Activated CD4-positive, alpha-beta T cell treated with anti-CD3 and anti-CD28 coated beads, Interleukin-2, amount 10 ng/mL, durations not matched to agents 7 days and 5 days (primary cell): ENCODE measurements at regions of chr3 and their contacts with region 1.

Region 1: GRCh38 chr3:4978204-4978965 is 852 bp upstream of the BHLHE40 start:
- DNase-seq: peak; percentile 83
- H3K4me3 Mint-ChIP-seq: peak overlapping the region; percentile 99
- H3K27ac Mint-ChIP-seq: peak overlapping the region; percentile 98
- H3K4me1 Mint-ChIP-seq: peaks cover 49% of the 10 kb centered on the region
- H3K27me3 Mint-ChIP-seq: no peaks in the 10 kb centered on the region

Region 2: DNA sequence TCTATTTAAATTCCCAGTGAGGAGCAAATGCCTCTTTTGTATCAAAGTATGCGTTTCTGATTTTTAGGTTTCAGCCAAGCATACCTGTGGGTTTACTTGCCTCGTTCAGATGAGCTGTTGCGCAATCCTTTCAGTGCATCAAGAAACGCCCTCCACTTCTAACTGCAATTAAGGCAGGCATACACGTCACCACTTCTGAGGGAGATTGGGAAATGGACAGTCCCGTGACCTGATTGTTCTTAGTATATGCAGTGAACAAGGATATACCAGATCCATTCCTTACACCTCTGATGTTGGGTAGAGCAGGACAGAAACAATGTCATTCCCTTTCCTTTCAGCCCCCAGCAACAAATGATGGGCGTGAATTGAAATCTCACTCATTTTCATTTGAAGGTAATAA is 266.2 kb before region 1 on chr3:
- CTCF ChIA-PET with region 1: interaction called, 33 read pairs
- POLR2A ChIA-PET with region 1: interaction called, 4 read pairs
- DNase-seq: no peak
- H3K4me3 Mint-ChIP-seq: no peak overlapping the region
- H3K27ac Mint-ChIP-seq: no peak overlapping the region
- H3K4me1 Mint-ChIP-seq: peaks cover 18% of the 10 kb centered on the region
- H3K27me3 Mint-ChIP-seq: no peaks in the 10 kb centered on the region

Region 3: GRCh38 chr3:4741404-4742307 is 236.7 kb before region 1 on chr3:
- CTCF ChIA-PET with region 1: interaction called, 14 read pairs
- POLR2A ChIA-PET with region 1: interaction called, 3 read pairs
- DNase-seq: no peak
- H3K4me3 Mint-ChIP-seq: no peak overlapping the region
- H3K27ac Mint-ChIP-seq: peak overlapping the region; percentile 89
- H3K4me1 Mint-ChIP-seq: peaks cover 74% of the 10 kb centered on the region
- H3K27me3 Mint-ChIP-seq: no peaks in the 10 kb centered on the region

Region 4: GRCh38 chr3:4850211-4850927 is 128.0 kb before region 1 on chr3:
- CTCF ChIA-PET with region 1: interaction called, 13 read pairs
- POLR2A ChIA-PET with region 1: interaction called, 15 read pairs
- DNase-seq: peak; percentile 61
- H3K4me3 Mint-ChIP-seq: peak overlapping the region; percentile 6
- H3K27ac Mint-ChIP-seq: peak overlapping the region; percentile 84
- H3K4me1 Mint-ChIP-seq: peaks cover 95% of the 10 kb centered on the region
- H3K27me3 Mint-ChIP-seq: no peaks in the 10 kb centered on the region

Region 5: GRCh38 chr3:5006755-5007202 is 28.4 kb after region 1 on chr3:
- CTCF ChIA-PET with region 1: interaction called, 197 read pairs
- POLR2A ChIA-PET with region 1: interaction called, 7 read pairs
- DNase-seq: peak; percentile 58
- H3K4me3 Mint-ChIP-seq: no peak overlapping the region
- H3K27ac Mint-ChIP-seq: peak overlapping the region; percentile 67
- H3K4me1 Mint-ChIP-seq: peaks cover 64% of the 10 kb centered on the region
- H3K27me3 Mint-ChIP-seq: no peaks in the 10 kb centered on the region

Region 6: GRCh38 chr3:5041315-5041714 is 62.9 kb after region 1 on chr3:
- CTCF ChIA-PET with region 1: interaction called, 13 read pairs
- POLR2A ChIA-PET with region 1: no interaction called
- DNase-seq: no peak
- H3K4me3 Mint-ChIP-seq: no peak overlapping the region
- H3K27ac Mint-ChIP-seq: no peak overlapping the region
- H3K4me1 Mint-ChIP-seq: peaks cover 17% of the 10 kb centered on the region
- H3K27me3 Mint-ChIP-seq: no peaks in the 10 kb centered on the region

Region 7: GRCh38 chr3:5750091-5750490 is 771.7 kb after region 1 on chr3:
- CTCF ChIA-PET with region 1: no interaction called
- POLR2A ChIA-PET with region 1: no interaction called
- DNase-seq: no peak
- H3K4me3 Mint-ChIP-seq: no peak overlapping the region
- H3K27ac Mint-ChIP-seq: no peak overlapping the region
- H3K4me1 Mint-ChIP-seq: no peaks in the 10 kb centered on the region
- H3K27me3 Mint-ChIP-seq: no peaks in the 10 kb centered on the region